ENCODE measurements at regions of chr2 and their contacts with region 1.

Region 1: GRCh38 chr2:217713395-217714286 is 289.2 kb downstream of the TNS1 start:
- DNase-seq: peak; percentile 85
- H3K4me3 Mint-ChIP-seq: no peak overlapping the region
- H3K27ac Mint-ChIP-seq: no peak overlapping the region
- H3K4me1 Mint-ChIP-seq: peaks cover 3% of the 10 kb centered on the region
- H3K27me3 Mint-ChIP-seq: no peaks in the 10 kb centered on the region

Region 2: DNA sequence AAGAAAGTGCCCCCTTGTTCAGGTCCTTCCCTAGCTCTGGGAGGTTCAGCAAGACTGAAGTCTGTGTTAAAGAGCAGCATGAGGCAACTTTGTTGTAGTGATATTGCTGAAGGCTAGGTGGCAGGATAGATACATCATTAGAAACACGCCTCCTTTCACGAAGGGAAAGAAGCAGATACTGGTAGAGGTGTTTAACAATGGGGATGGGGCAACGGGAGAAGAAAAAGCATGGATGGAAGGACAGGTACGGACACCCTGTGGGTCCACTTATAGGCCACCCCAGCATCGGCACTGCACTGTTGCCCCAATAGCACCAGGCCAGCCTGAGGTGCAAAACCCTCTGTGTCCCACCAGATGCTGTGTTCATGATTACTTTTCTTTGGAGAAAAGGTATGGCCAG is 1014.7 kb before region 1 on chr2:
- CTCF ChIA-PET with region 1: interaction called, 6 read pairs
- intact Hi-C with region 1: loop called (anchors 1 kb)
- DNase-seq: peak; percentile 27
- H3K4me3 Mint-ChIP-seq: no peak overlapping the region
- H3K27ac Mint-ChIP-seq: no peak overlapping the region
- H3K4me1 Mint-ChIP-seq: peaks cover 8% of the 10 kb centered on the region
- H3K27me3 Mint-ChIP-seq: peaks cover 40% of the 10 kb centered on the region

Region 3: DNA sequence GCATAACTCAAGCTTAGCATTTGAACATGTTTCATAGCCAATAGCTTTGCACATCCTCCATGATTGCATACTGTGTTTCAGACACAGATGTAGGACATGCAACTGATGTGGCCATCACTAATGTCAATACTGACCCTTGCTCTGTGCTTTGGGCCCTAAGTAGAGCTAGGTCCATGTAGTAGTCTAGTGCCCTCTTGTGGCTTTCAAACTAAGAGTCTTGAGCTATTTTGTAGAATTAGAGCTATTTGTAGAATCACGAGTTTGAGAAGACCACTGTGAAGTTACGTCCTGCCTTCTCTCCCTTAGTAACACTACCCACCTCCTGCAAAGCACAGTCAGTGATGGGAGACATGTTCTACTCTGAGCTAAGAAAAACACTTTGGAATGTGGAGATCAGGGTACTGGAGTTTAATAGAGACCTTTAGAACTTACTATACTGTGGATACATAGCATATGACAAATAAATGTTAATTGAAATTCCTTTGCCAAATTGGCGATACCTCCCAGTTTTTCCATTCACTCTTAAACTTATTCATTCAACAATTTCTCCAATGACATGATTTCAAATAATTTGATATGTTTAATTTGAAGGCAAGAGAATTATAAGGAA is 547.3 kb before region 1 on chr2:
- CTCF ChIA-PET with region 1: interaction called, 3 read pairs
- intact Hi-C with region 1: loop called (anchors 10 kb)
- DNase-seq: no peak
- H3K4me3 Mint-ChIP-seq: no peak overlapping the region
- H3K27ac Mint-ChIP-seq: no peak overlapping the region
- H3K4me1 Mint-ChIP-seq: peaks cover 15% of the 10 kb centered on the region
- H3K27me3 Mint-ChIP-seq: peaks cover 10% of the 10 kb centered on the region

Region 4: DNA sequence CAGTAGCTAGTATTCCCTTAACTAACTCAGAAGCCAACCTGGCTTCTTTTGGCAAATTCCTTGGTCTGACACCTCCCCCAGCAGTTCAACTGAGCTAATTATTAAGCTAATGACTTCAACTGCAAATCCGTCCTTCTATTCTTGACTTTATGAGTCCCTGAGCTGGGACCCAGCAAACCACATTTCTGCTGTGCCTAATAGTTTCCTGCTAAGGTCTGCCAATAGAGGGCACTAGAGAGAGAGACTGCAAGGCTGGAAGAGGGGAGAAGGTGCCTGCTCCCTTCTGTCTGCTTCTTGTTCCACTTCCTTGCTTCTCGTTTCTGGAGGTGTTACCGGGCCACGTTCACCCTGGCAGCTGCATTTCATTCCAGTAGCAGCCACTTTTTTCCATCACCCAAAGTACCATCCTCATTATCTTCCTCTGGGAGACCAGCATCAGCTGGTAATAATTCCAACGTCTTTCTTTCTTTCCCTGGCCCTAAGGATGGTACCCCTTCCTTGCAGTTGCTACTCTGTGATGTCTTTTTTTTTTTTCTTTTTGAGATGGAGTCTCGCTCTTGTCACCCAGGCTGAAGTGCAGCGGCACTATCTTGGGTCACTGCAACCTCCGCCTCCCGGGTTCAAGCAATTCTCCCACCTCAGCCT is 62.8 kb before region 1 on chr2:
- CTCF ChIA-PET with region 1: interaction called, 40 read pairs
- intact Hi-C with region 1: loop called (anchors 1 kb)
- DNase-seq: peak; percentile 42
- H3K4me3 Mint-ChIP-seq: no peak overlapping the region
- H3K27ac Mint-ChIP-seq: no peak overlapping the region
- H3K4me1 Mint-ChIP-seq: no peaks in the 10 kb centered on the region
- H3K27me3 Mint-ChIP-seq: no peaks in the 10 kb centered on the region

Region 5: DNA sequence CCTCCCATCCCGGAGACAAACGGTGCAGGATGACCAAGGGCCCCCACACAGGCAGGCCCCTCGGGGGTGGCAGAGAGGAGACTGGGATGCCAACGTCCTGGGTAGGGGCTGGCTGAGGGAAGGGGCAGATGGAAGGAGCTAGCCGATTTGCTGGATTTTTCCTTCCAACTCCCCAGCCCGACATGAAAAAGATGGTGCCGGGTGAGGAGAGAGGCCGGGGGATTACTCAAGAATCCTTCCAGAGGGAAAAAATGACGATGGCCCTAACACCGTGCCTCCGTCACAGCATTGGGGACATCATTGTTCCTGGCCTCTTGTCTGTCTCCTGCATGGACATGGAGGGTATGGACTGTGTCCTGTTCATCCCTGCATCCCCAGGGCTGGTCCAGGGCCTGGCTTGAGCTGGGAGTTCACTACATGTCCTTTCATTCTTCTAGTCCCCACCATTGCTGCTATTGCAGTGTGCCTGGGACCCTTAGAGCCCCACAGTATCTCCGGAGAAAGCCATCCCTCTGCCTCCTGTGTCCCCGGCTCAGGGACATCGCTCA is 71.4 kb after region 1 on chr2:
- CTCF ChIA-PET with region 1: no interaction called
- intact Hi-C with region 1: no loop called
- DNase-seq: no peak
- H3K4me3 Mint-ChIP-seq: no peak overlapping the region
- H3K27ac Mint-ChIP-seq: peak overlapping the region; percentile 51
- H3K4me1 Mint-ChIP-seq: peaks cover 7% of the 10 kb centered on the region
- H3K27me3 Mint-ChIP-seq: peaks cover 2% of the 10 kb centered on the region

Region 6: DNA sequence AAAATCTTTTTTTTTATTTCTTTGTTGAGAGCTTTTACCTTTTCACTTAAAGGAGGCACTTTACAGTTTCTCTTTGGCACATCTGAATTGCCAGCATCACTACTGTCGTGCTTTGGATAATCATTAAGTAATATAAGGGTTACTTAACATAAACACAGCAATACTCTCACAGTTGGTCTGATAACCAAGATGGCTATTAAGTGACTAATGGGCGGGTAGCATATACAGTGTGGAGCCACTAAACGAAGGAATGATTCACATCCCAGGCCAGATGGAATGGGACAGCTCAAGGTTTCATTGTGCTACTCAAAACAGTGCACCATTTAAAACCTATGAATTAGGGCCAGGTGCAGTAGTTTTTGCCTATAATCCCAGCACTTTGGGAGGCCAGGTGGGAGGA is 826.4 kb after region 1 on chr2:
- CTCF ChIA-PET with region 1: no interaction called
- intact Hi-C with region 1: no loop called
- DNase-seq: no peak
- H3K4me3 Mint-ChIP-seq: no peak overlapping the region
- H3K27ac Mint-ChIP-seq: no peak overlapping the region
- H3K4me1 Mint-ChIP-seq: no peaks in the 10 kb centered on the region
- H3K27me3 Mint-ChIP-seq: no peaks in the 10 kb centered on the region